ENCODE measurements at regions of chr7 and their contacts with region 1.

Region 1: GRCh38 chr7:79933144-79933543 is 201.5 kb upstream of the GNAI1 start:
- DNase-seq: no peak
- ATAC-seq: no peak
- H3K4me3 ChIP-seq: no peak overlapping the region
- H3K4me3 Mint-ChIP-seq: no peak overlapping the region
- H3K27ac ChIP-seq: no peak overlapping the region
- H3K27ac Mint-ChIP-seq: no peak overlapping the region
- H3K4me1 ChIP-seq: no peaks in the 10 kb centered on the region
- H3K4me1 Mint-ChIP-seq: no peaks in the 10 kb centered on the region
- H3K27me3 ChIP-seq: no peaks in the 10 kb centered on the region
- H3K27me3 Mint-ChIP-seq: no peaks in the 10 kb centered on the region
- CTCF ChIP-seq: no peak

Region 2: DNA sequence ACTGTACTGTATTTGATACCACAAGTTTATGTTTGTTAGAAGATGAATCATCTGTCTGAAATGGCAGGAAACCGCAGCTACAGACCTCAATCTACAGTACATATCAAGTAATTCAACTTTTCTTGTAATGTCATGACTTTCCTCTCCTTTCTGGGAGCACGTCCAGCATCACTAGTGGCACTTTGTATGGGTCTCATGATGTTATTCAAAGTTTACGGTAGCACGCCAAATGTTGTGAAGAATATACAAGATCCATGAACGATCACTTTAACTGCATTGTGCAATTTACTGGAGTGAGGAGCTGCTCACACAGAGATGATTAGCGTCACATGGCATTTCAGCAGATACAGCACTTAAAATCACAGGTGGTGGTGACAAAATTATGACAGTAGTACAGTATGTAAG is 56.3 kb before region 1 on chr7:
- CTCF ChIA-PET with region 1: no interaction called
- POLR2A ChIA-PET with region 1: no interaction called
- intact Hi-C with region 1: loop called in 1 of 2 experiments (anchors 10 kb)
- DNase-seq: no peak
- ATAC-seq: no peak
- H3K4me3 ChIP-seq: no peak overlapping the region
- H3K4me3 Mint-ChIP-seq: no peak overlapping the region
- H3K27ac ChIP-seq: no peak overlapping the region
- H3K27ac Mint-ChIP-seq: no peak overlapping the region
- H3K4me1 ChIP-seq: no peaks in the 10 kb centered on the region
- H3K4me1 Mint-ChIP-seq: no peaks in the 10 kb centered on the region
- H3K27me3 ChIP-seq: no peaks in the 10 kb centered on the region
- H3K27me3 Mint-ChIP-seq: no peaks in the 10 kb centered on the region
- CTCF ChIP-seq: no peak

Region 3: GRCh38 chr7:79949778-79950177 is 16.6 kb after region 1 on chr7:
- CTCF ChIA-PET with region 1: no interaction called
- POLR2A ChIA-PET with region 1: no interaction called
- intact Hi-C with region 1: no loop called
- DNase-seq: no peak
- ATAC-seq: no peak
- H3K4me3 ChIP-seq: no peak overlapping the region
- H3K4me3 Mint-ChIP-seq: no peak overlapping the region
- H3K27ac ChIP-seq: no peak overlapping the region
- H3K27ac Mint-ChIP-seq: no peak overlapping the region
- H3K4me1 ChIP-seq: no peaks in the 10 kb centered on the region
- H3K4me1 Mint-ChIP-seq: no peaks in the 10 kb centered on the region
- H3K27me3 ChIP-seq: no peaks in the 10 kb centered on the region
- H3K27me3 Mint-ChIP-seq: no peaks in the 10 kb centered on the region
- CTCF ChIP-seq: no peak

Region 4: DNA sequence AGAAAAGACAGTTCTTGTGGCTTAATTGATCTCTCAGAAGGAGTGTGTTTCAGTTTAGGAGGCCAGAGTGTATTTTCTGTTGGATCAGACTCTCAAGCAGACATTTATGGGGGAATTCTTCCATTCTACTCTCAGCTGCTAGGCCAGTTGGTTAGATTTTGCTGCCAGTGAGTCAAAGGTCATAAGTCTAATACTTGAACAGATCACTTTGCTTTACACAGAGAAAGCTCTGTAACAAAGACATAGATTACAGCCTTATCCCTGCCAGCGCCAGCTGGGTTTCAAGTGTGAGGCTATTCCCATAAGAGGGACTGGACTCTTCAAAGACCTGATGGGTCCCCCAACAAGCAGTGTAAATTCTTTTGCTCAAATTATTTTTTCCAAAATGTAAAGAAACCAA is 1131.3 kb after region 1 on chr7:
- CTCF ChIA-PET with region 1: no interaction called
- POLR2A ChIA-PET with region 1: no interaction called
- intact Hi-C with region 1: no loop called
- DNase-seq: no peak
- ATAC-seq: no peak
- H3K4me3 ChIP-seq: no peak overlapping the region
- H3K4me3 Mint-ChIP-seq: no peak overlapping the region
- H3K27ac ChIP-seq: no peak overlapping the region
- H3K27ac Mint-ChIP-seq: no peak overlapping the region
- H3K4me1 ChIP-seq: no peaks in the 10 kb centered on the region
- H3K4me1 Mint-ChIP-seq: no peaks in the 10 kb centered on the region
- H3K27me3 ChIP-seq: no peaks in the 10 kb centered on the region
- H3K27me3 Mint-ChIP-seq: no peaks in the 10 kb centered on the region
- CTCF ChIP-seq: no peak

Measured in CD4-positive, alpha-beta T cell (primary cell).